ENCODE measurements at regions of chr1 and their contacts with region 1.

Region 1: GRCh38 chr1:44049839-44050238 is 18.6 kb upstream of the SLC6A9 start:
- DNase-seq: no peak
- ATAC-seq: no peak
- H3K4me3 ChIP-seq: no peak overlapping the region
- H3K27ac ChIP-seq: no peak overlapping the region
- H3K4me1 ChIP-seq: peaks cover 14% of the 10 kb centered on the region
- H3K27me3 ChIP-seq: 0 out of 5 replicates have a peak, but pooled peaks cover 0 to 3% of the 10 kb centered on the region in 2 experiments
- CTCF ChIP-seq: no peak
- EP300 ChIP-seq: no peak
- POLR2A ChIP-seq: no peak
- RAD21 ChIP-seq: no peak

Region 2: DNA sequence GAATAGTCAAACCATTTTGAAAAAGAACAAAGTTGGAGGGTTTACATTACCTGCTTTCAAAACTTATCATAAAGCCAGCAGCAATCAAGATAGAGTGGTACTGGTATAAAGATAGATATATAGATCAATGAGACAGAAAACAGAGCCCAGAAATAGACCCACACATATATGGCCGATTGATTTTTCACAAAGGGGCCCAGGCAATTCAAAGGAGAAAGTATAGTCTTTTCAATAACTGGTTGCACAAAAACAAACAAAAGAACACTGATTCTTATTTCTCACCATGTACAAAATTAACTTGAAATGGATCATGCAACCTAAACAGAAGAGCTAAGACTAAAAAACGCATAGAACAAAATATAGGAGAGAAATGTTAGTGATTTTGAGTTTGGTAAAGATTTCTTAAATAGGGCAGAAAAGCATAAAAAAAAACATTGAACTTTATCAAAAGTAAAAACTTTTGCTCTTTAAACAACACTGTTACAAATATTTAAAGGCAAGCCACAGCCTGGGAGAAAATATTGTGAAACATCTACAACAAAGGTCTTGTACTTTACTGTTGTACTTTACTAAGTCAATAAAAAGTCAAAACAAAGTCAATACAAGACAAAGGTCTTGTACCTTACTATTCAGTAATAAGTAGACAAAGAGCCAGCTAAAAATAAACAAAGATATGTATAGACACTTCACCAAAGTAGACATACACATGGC is 292.3 kb before region 1 on chr1:
- CTCF ChIA-PET with region 1: no interaction called
- POLR2A ChIA-PET with region 1: no interaction called
- in situ Hi-C with region 1: loop called (anchors 10 kb)
- intact Hi-C with region 1: no loop called
- DNase-seq: peak; percentile 69
- ATAC-seq: peak; percentile 88
- H3K4me3 ChIP-seq: peak overlapping the region in 1 of 3 experiments; percentile 20; a peak in 1 of 6 replicates
- H3K27ac ChIP-seq: peak overlapping the region; percentile 63
- H3K4me1 ChIP-seq: peaks cover 39% of the 10 kb centered on the region
- H3K27me3 ChIP-seq: no peaks in the 10 kb centered on the region
- CTCF ChIP-seq: no peak
- EP300 ChIP-seq: peak in 1 of 2 experiments; percentile 67; a peak in 2 of 4 replicates
- POLR2A ChIP-seq: no peak
- RAD21 ChIP-seq: no peak

Region 3: DNA sequence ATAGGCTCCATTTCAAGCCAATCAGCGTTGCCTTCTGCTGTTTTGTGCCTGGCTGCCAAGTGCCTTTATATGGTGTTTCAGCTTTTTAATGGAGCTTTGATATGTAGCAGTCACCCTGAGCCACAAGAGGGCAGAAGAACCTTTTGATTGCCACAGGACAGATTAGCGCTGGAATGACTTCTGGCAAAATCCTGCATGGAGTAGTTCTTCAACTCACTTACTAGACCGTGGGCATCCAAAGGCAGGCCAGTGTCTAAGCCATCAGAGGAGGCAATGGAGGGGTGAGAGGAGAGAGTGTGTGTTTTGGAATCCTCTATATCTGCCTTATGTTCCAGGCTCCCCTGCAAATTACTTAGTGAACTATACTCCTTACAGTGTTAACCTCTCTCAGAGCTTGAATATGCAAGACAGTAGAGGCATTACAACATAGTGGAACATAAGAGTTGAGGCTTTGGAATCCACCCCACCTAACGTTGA is 286.3 kb before region 1 on chr1:
- CTCF ChIA-PET with region 1: interaction called, 5 read pairs
- POLR2A ChIA-PET with region 1: no interaction called
- in situ Hi-C with region 1: loop called (anchors 10 kb)
- intact Hi-C with region 1: loop called (anchors 1 kb)
- DNase-seq: peak; percentile 71
- ATAC-seq: peak; percentile 95
- H3K4me3 ChIP-seq: no peak overlapping the region
- H3K27ac ChIP-seq: no peak overlapping the region
- H3K4me1 ChIP-seq: peaks cover 17% of the 10 kb centered on the region
- H3K27me3 ChIP-seq: no peaks in the 10 kb centered on the region
- CTCF ChIP-seq: peak; percentile 89
- EP300 ChIP-seq: no peak
- POLR2A ChIP-seq: no peak
- RAD21 ChIP-seq: peak; percentile 85

Region 4: DNA sequence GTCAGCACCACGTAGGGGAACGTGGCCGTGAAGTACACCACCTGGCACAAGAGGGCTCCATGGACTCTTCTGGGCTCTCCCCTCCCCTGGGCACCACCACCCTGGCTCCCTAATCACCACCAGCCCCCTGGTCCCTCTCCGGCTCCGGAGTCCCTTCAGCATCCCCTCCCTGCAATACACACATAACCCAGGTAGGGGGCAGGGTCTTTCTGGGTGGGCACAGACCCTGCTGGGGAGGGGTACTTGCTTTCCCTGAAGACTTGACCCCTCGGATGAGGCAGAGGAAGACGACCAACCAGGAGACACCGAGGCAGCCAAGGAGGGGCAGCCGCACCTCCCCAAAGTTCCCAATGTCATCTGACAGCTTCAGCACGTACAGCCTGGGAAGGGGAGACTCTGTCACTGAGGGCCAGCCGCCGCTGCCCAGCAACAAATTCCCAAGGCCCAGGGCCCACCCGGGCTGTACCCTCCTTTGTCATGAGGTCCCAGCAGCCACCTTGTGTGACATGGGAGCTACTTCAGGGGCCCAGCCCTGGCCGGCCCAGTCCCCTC is 47.2 kb before region 1 on chr1:
- CTCF ChIA-PET with region 1: interaction called, 15 read pairs
- POLR2A ChIA-PET with region 1: no interaction called
- in situ Hi-C with region 1: no loop called
- intact Hi-C with region 1: no loop called
- DNase-seq: no peak
- ATAC-seq: peak; percentile 13; the same call in 1 of the 3 replicates
- H3K4me3 ChIP-seq: no peak overlapping the region
- H3K27ac ChIP-seq: no peak overlapping the region
- H3K4me1 ChIP-seq: peaks cover 9% of the 10 kb centered on the region
- H3K27me3 ChIP-seq: no peaks in the 10 kb centered on the region
- CTCF ChIP-seq: no peak
- EP300 ChIP-seq: no peak
- POLR2A ChIP-seq: no peak
- RAD21 ChIP-seq: no peak

Measured in HepG2 (cell line).